HEK293 (cell line): ENCODE measurements at regions of chr22 and their contacts with region 1.

Region 1: GRCh38 chr22:31451709-31452571 is 37.7 kb downstream of the EIF4ENIF1 start:
- H3K4me3 ChIP-seq: no peak overlapping the region
- H3K27ac ChIP-seq: no peak overlapping the region
- H3K4me1 ChIP-seq: no peaks in the 10 kb centered on the region
- CTCF ChIP-seq: no peak

Region 2: GRCh38 chr22:31262312-31263080 is 189.4 kb before region 1 on chr22:
- CTCF ChIA-PET with region 1: no interaction called
- POLR2A ChIA-PET with region 1: no interaction called
- H3K4me3 ChIP-seq: no peak overlapping the region
- H3K27ac ChIP-seq: no peak overlapping the region
- H3K4me1 ChIP-seq: no peaks in the 10 kb centered on the region
- CTCF ChIP-seq: no peak

Region 3: DNA sequence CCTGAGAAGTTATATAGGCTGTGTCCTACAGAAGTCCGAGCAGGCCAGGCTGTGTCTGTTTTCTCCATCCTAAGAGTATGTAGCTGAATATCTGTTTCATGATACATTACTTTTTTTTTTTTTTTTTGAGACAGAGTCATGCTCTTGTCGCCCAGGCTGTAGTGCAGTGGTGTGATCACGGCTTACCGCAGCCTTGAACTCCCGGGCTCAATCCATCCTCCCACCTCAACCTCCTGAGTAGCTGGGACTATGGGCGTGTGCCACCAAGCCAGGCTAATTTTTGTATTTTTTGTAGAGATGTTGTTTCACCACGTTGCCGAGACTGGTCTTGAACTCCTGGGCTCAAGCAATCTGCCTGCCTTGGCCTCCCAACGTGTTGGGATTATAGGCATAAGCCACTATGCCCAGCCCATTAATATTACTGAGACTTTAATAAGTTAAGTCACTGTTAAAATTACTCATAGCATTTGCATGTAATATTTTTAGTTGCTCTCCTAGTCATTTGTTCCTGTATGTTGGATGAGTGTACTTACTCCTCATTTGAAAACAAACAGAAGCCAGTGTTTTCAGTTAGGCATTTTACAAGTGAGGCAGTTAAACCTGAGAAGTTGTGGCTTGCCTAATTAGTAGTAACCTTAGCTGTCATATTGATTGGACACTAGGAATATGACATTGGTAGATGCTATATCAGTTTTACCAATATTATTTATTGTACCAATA is 26.4 kb before region 1 on chr22:
- CTCF ChIA-PET with region 1: interaction called, 10 read pairs
- POLR2A ChIA-PET with region 1: no interaction called
- H3K4me3 ChIP-seq: no peak overlapping the region
- H3K27ac ChIP-seq: no peak overlapping the region
- H3K4me1 ChIP-seq: no peaks in the 10 kb centered on the region
- CTCF ChIP-seq: no peak

Region 4: DNA sequence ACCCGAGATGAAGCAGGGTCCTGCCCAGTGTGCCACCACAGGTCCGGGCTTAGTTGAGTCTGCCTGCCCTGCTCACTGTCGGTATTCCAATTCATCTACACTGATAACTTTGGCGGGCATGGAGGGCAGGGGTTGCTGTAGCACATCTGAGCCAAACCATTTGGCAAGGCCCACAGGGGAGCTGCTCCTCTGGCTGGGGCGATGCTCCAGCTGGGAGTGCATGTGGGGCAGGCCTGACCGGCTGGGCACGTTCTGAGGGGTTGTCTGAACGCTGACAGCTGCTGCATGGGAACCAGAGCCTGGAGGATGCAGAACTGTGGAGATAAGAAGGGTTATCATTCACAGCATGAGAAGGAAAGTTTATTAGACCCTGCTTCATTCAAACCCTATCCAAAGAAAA is 12.1 kb before region 1 on chr22:
- CTCF ChIA-PET with region 1: interaction called, 26 read pairs
- POLR2A ChIA-PET with region 1: interaction called, 3 read pairs
- H3K4me3 ChIP-seq: no peak overlapping the region
- H3K27ac ChIP-seq: no peak overlapping the region
- H3K4me1 ChIP-seq: no peaks in the 10 kb centered on the region
- CTCF ChIP-seq: no peak